Activated CD4-positive, alpha-beta memory T cell treated with anti-CD3 and anti-CD28 coated beads for 36 hours (primary cell): ENCODE measurements at regions of chr6 and their contacts with region 1.

Region 1: GRCh38 chr6:150987371-150987828 is 121.9 kb downstream of the MTHFD1L start:
- DNase-seq: peak; percentile 83
- H3K4me3 Mint-ChIP-seq: peak overlapping the region; percentile 55
- H3K27ac Mint-ChIP-seq: peak overlapping the region; percentile 96
- H3K4me1 Mint-ChIP-seq: peaks cover 13% of the 10 kb centered on the region
- H3K27me3 Mint-ChIP-seq: no peaks in the 10 kb centered on the region

Region 2: GRCh38 chr6:150491131-150491810 is 496.1 kb before region 1 on chr6:
- CTCF ChIA-PET with region 1: no interaction called
- POLR2A ChIA-PET with region 1: no interaction called
- intact Hi-C with region 1: loop called (anchors 2 kb)
- DNase-seq: peak; percentile 35
- H3K4me3 Mint-ChIP-seq: no peak overlapping the region
- H3K27ac Mint-ChIP-seq: peak overlapping the region; percentile 73
- H3K4me1 Mint-ChIP-seq: peaks cover 25% of the 10 kb centered on the region
- H3K27me3 Mint-ChIP-seq: no peaks in the 10 kb centered on the region

Region 3: GRCh38 chr6:150967910-150968309 is 19.5 kb before region 1 on chr6:
- CTCF ChIA-PET with region 1: no interaction called
- POLR2A ChIA-PET with region 1: no interaction called
- intact Hi-C with region 1: no loop called
- DNase-seq: no peak
- H3K4me3 Mint-ChIP-seq: no peak overlapping the region
- H3K27ac Mint-ChIP-seq: no peak overlapping the region
- H3K4me1 Mint-ChIP-seq: no peaks in the 10 kb centered on the region
- H3K27me3 Mint-ChIP-seq: no peaks in the 10 kb centered on the region

Region 4: GRCh38 chr6:151004415-151005024 is 17.1 kb after region 1 on chr6:
- CTCF ChIA-PET with region 1: interaction called, 6 read pairs
- POLR2A ChIA-PET with region 1: interaction called, 5 read pairs
- intact Hi-C with region 1: loop called (anchors 1 kb)
- DNase-seq: no peak
- H3K4me3 Mint-ChIP-seq: no peak overlapping the region
- H3K27ac Mint-ChIP-seq: peak overlapping the region; percentile 7
- H3K4me1 Mint-ChIP-seq: peaks cover 12% of the 10 kb centered on the region
- H3K27me3 Mint-ChIP-seq: no peaks in the 10 kb centered on the region

Region 5: DNA sequence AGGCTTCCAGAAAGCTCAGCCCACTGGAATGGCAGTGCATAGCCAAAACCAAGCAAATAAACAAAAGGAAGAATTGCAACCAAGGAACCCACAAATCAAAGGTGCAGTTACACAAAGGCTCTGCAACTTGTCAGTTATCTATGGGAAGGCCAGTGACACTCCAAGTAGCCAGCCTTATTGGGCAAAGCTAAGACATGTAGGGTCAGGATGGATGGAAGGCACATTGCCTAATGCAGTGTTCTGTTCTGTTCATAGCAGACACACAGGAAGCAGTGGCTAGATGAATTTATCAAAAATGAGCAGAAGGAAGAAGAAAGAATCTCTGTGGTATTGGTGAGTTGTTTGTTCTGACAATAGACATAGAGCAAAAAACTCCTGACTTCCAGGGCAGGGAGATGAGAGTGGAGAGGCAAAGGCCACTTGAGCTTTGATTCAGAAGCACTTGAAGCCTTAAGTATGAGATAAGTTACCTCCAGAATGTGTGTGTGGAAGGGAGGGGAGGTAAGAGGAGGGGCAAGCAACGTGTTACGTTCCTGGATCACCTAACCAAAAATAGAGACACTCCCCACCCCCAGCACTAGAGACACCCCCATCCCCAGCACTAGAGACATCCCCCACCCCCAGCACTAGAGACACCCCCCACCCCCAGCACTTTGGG is 194.4 kb after region 1 on chr6:
- CTCF ChIA-PET with region 1: no interaction called
- POLR2A ChIA-PET with region 1: no interaction called
- intact Hi-C with region 1: no loop called
- DNase-seq: no peak
- H3K4me3 Mint-ChIP-seq: no peak overlapping the region
- H3K27ac Mint-ChIP-seq: no peak overlapping the region
- H3K4me1 Mint-ChIP-seq: no peaks in the 10 kb centered on the region
- H3K27me3 Mint-ChIP-seq: peaks cover 16% of the 10 kb centered on the region

Region 6: DNA sequence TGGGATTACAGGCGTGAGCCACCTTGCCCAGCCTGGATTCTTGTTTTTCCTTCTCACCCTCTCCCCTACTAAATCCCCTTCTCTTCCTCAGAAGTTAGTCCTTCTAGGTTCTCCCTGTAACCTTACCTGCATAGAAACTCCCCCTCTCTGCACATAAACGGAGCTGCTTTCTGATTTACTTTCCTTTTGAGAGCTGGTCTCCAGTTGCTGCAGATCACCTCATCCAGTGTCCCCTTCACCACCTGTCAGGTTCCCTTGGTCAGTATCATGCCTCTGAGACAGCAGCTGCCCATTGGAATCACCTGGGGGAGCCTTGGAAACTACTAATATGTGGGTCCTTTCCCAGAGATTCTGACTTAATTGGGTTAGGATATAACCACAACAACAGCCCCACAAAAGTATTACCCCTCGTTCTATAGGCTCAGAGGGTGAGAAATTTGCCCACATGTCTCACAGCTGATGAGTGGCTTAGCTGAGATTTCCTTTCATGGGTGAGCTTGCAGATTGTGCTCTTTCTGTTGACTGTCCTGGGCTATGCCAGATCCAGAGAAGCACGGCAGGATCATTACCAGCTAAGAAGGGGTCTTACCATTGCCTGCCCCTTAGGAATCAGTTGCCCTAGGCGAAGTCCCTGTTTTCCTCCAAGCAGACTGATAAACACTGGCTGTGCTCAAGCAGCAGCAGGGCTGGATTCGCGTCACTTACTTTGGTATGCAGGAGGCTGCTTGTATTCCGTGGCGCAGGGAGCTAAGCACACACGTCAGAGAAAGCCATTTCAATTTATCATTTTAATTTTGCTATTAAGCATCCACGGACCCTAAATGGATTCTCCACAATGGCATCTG is 303.7 kb after region 1 on chr6:
- CTCF ChIA-PET with region 1: no interaction called
- POLR2A ChIA-PET with region 1: no interaction called
- intact Hi-C with region 1: loop called (anchors 1 kb)
- DNase-seq: no peak
- H3K4me3 Mint-ChIP-seq: no peak overlapping the region
- H3K27ac Mint-ChIP-seq: no peak overlapping the region
- H3K4me1 Mint-ChIP-seq: peaks cover 26% of the 10 kb centered on the region
- H3K27me3 Mint-ChIP-seq: peaks cover 35% of the 10 kb centered on the region